ENCODE measurements at regions of chr3 and their contacts with region 1.

Region 1: DNA sequence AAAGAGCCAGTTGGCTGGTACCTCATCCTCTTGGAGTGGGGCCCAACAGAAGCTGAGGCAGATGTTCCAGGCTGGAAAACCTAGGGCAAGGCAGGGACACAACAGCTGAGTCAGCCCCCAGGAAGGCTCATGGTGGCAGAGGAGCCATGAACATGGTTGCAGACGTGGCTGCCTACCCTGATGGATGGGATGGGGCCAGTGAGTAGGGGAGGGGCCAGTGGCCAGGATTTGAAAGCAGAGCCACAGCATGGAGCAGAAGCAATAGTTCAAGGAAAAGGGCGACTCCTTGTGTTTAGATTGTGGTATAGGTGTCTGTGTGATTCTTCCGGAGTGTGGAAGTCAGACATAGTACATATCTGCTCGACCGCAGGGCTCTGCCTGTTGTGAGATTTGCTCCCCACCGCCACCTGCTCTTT is 24.2 kb downstream of the PXYLP1 start:
- DNase-seq: peak in 6 of 9 experiments; percentile 29 to 79 (median 58)
- ATAC-seq: peak; percentile 98
- H3K4me3 ChIP-seq: no peak overlapping the region
- H3K4me3 Mint-ChIP-seq: no peak overlapping the region
- H3K27ac ChIP-seq: no peak overlapping the region
- H3K27ac Mint-ChIP-seq: peak overlapping the region; percentile 80
- H3K4me1 ChIP-seq: peaks cover 13% of the 10 kb centered on the region
- H3K4me1 Mint-ChIP-seq: peaks cover 35% of the 10 kb centered on the region
- H3K27me3 ChIP-seq: no peaks in the 10 kb centered on the region
- H3K27me3 Mint-ChIP-seq: no peaks in the 10 kb centered on the region
- CTCF ChIP-seq: peak; percentile 55

Region 2: GRCh38 chr3:140834263-140835037 is 421.4 kb before region 1 on chr3:
- CTCF ChIA-PET with region 1: no interaction called
- POLR2A ChIA-PET with region 1: no interaction called
- intact Hi-C with region 1: no loop called
- DNase-seq: no peak
- ATAC-seq: no peak
- H3K4me3 ChIP-seq: no peak overlapping the region
- H3K4me3 Mint-ChIP-seq: no peak overlapping the region
- H3K27ac ChIP-seq: no peak overlapping the region
- H3K27ac Mint-ChIP-seq: no peak overlapping the region
- H3K4me1 ChIP-seq: no peaks in the 10 kb centered on the region
- H3K4me1 Mint-ChIP-seq: peaks cover 9% of the 10 kb centered on the region
- H3K27me3 ChIP-seq: no peaks in the 10 kb centered on the region
- H3K27me3 Mint-ChIP-seq: peaks cover 6% of the 10 kb centered on the region
- CTCF ChIP-seq: no peak

Region 3: DNA sequence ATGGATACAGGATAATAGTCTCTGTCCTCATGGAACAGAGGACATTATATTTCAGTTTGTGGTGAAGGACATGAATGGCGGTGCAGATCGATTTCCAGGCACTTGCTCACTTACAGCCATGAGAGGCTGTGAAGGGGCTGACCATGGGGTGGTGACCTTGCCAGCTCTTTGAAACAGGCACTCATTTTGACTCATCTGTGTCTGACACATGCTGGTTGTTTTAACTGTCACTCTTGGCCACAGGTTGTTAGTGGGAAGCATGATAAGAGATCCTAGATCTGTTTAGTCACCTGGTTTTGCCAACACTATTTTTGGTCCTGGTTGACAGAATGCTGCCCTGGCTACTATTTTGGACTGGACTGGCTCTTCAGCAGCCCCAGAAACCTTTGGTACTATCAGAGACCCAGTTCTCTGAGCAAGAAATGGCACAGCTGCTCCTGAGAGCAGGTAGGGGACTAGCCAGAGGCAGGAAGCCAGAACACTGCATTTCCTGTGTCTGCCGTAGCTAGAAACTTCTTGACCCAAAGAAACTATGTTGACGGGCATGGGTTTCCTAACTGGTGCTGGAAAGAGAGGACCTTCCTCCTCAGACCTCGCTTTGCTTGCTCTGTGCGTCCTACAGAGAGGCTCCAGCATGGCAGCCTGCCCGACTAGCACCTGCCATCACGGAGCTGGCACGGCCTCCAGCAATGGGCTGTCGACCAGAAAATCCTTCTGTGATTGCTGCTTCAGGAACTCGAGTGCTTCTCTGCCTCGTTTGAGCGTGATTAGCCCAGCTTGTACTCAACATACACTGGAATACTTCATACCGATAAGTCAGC is 17.9 kb before region 1 on chr3:
- CTCF ChIA-PET with region 1: interaction called, 144 read pairs
- POLR2A ChIA-PET with region 1: interaction called, 34 read pairs
- intact Hi-C with region 1: loop called (anchors 1 kb)
- DNase-seq: peak in 3 of 9 experiments; percentile 19 to 55 (median 29)
- ATAC-seq: no peak
- H3K4me3 ChIP-seq: no peak overlapping the region
- H3K4me3 Mint-ChIP-seq: peak overlapping the region; percentile 69
- H3K27ac ChIP-seq: peak overlapping the region in 1 of 2 experiments; percentile 66
- H3K27ac Mint-ChIP-seq: peak overlapping the region; percentile 90
- H3K4me1 ChIP-seq: peaks cover 74% of the 10 kb centered on the region
- H3K4me1 Mint-ChIP-seq: peaks cover 90% of the 10 kb centered on the region
- H3K27me3 ChIP-seq: no peaks in the 10 kb centered on the region
- H3K27me3 Mint-ChIP-seq: no peaks in the 10 kb centered on the region
- CTCF ChIP-seq: no peak

Region 4: DNA sequence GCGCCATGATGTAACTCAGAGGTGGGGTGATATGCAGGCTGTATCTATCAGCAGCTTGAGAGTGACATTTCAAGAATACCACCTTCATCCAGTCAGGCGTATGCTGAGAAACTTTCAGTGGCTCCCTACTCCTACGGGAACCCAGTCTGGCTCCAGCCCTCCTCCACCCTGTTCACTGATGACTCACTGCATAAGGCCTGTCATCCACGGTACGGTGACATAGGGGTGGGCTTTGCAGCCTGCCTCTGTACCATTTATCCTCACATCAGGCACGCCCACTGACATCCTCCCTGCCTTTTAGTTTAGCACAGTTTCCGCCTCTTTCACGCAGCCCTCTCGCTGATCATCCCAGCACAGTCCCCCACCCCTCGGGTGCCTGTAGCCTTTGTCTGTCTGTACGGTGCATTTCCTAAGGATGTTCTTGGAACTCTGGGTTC is 12.6 kb before region 1 on chr3:
- CTCF ChIA-PET with region 1: interaction called, 144 read pairs
- POLR2A ChIA-PET with region 1: interaction called, 3 read pairs
- intact Hi-C with region 1: loop called in 1 of 2 experiments (anchors 1 kb)
- DNase-seq: peak; percentile 19 to 89 (median 74)
- ATAC-seq: peak; percentile 98
- H3K4me3 ChIP-seq: no peak overlapping the region
- H3K4me3 Mint-ChIP-seq: peak overlapping the region; percentile 57
- H3K27ac ChIP-seq: peak overlapping the region; percentile 2 to 58
- H3K27ac Mint-ChIP-seq: peak overlapping the region; percentile 93
- H3K4me1 ChIP-seq: peaks cover 39% of the 10 kb centered on the region
- H3K4me1 Mint-ChIP-seq: peaks cover 52% of the 10 kb centered on the region
- H3K27me3 ChIP-seq: no peaks in the 10 kb centered on the region
- H3K27me3 Mint-ChIP-seq: no peaks in the 10 kb centered on the region
- CTCF ChIP-seq: no peak